CD8-positive, alpha-beta T cell (primary cell): ENCODE measurements at regions of chr2 and their contacts with region 1.

Region 1: DNA sequence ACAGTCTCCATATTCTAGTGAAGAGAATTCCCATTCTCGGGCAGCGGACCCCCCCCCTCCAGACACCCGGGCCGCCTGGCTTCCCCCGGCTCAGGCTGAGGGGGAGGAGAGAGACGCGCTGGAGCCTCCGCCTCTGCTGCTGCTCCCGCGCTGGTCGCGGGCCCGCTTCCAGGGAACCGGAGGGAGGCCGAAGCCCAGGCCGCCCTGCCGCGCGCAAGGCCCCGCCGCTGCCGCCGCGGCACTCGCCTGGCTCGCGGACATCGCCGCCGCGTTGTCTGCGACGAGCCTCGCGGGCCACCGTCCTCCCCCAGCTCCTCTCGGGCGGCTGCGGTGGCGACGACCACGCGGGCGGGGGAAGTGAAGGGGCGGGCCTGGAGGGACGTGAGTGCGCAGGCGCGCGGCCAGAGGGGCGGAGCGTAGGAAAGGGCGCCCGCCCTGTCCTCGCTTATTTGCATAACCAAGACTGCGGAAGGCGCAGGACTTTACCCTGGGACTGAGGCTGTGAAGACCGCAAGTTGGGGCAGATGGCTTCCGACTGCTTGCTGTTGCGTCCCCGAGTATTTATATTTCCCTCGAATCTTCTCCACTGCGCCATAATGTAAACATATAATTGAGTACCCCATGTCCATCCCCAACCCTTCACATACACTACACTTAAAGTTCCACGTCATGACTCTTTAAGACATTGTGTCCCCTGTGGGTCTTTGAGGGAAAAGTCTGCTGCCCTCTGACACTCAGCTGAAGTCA is at the start of gene ARL5A:
- DNase-seq: peak; percentile 91 to 98 (median 94)
- ATAC-seq: peak; percentile 95
- H3K4me3 ChIP-seq: peak within 1 kb of the TSS; percentile 66 to 97
- H3K4me3 Mint-ChIP-seq: peak within 1 kb of the TSS; percentile 85
- H3K27ac ChIP-seq: peak within 1 kb of the TSS; percentile 22 to 80
- H3K27ac Mint-ChIP-seq: peak within 1 kb of the TSS; percentile 93
- H3K4me1 ChIP-seq: peaks cover 34% of the 10 kb centered on the region
- H3K4me1 Mint-ChIP-seq: peaks cover 53% of the 10 kb centered on the region
- H3K27me3 ChIP-seq: no peaks in the 10 kb centered on the region
- H3K27me3 Mint-ChIP-seq: no peaks in the 10 kb centered on the region
- CTCF ChIP-seq: no peak
- total RNA-seq, gene ARL5A: 18.8 to 24.1 TPM

Region 2: GRCh38 chr2:150981826-150982225 is 846.5 kb before region 1 on chr2:
- CTCF ChIA-PET with region 1: no interaction called
- POLR2A ChIA-PET with region 1: no interaction called
- intact Hi-C with region 1: no loop called
- DNase-seq: no peak
- ATAC-seq: no peak
- H3K4me3 ChIP-seq: no peak overlapping the region
- H3K4me3 Mint-ChIP-seq: no peak overlapping the region
- H3K27ac ChIP-seq: no peak overlapping the region
- H3K27ac Mint-ChIP-seq: no peak overlapping the region
- H3K4me1 ChIP-seq: no peaks in the 10 kb centered on the region
- H3K4me1 Mint-ChIP-seq: no peaks in the 10 kb centered on the region
- H3K27me3 ChIP-seq: no peaks in the 10 kb centered on the region
- H3K27me3 Mint-ChIP-seq: peaks cover 15% of the 10 kb centered on the region
- CTCF ChIP-seq: no peak

Region 3: DNA sequence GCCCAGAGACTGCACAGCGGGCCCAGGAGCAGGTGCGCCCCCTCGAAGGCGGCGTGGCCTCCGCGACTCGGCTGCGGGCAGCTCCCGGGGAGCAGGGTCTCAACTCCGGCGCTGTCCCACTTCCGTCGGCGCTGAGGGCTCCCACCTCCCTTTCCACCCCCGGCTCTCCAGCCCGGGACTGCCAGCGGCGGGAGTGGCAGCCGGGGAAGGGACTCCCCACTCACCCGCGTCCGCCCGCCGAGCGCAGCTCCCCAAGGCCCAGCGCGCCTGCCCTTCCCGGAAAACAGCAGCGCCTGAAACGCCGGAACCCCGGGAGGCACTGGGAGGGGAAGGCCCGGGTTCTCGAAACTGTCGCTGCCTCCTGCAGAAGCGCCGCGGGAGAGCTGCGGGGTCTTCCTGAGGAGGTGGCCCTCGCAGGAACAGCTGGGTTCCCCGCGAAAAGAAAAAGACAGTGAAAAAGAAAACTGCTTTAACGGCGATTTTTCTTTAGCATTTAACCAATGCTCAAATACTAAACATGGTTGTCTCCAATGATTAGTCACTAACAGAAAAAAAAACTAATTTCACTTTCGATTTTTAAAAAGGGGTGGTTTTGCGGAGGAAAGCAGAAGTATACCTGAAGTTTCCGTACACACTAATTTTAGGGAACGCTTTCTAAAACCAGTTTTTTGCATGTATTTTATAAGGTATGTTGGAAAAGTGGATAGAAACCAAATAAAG is 538.8 kb before region 1 on chr2 and contains the start of gene NMI:
- CTCF ChIA-PET with region 1: no interaction called
- POLR2A ChIA-PET with region 1: no interaction called
- intact Hi-C with region 1: loop called (anchors 5 kb)
- DNase-seq: peak; percentile 30 to 82 (median 64)
- ATAC-seq: peak; percentile 68
- H3K4me3 ChIP-seq: peak within 1 kb of the TSS; percentile 89 to 92
- H3K4me3 Mint-ChIP-seq: peak within 1 kb of the TSS; percentile 95
- H3K27ac ChIP-seq: peak within 1 kb of the TSS; percentile 92 to 97
- H3K27ac Mint-ChIP-seq: peak within 1 kb of the TSS; percentile 99
- H3K4me1 ChIP-seq: peaks cover 31% of the 10 kb centered on the region
- H3K4me1 Mint-ChIP-seq: peaks cover 46% of the 10 kb centered on the region
- H3K27me3 ChIP-seq: no peaks in the 10 kb centered on the region
- H3K27me3 Mint-ChIP-seq: no peaks in the 10 kb centered on the region
- CTCF ChIP-seq: no peak
- total RNA-seq, gene NMI: 16.9 to 18.0 TPM

Region 4: DNA sequence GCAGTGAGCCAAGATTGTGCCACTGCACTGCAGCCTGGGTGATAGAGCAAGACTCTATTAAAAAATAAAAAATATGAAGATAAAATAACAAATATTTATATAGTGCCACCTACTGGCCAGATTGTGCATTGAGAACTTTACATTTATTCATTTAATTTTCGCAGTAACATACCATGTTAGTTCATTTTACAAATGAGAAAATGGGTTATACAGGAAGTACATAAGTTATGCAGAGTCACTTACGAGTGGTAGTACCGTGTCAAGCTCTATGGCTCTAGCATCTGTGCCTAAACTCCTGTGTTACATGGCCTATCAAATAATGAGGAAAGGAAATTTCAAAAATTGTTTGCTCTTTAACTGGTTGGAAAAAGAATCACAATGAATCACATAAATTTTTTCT is 390.7 kb before region 1 on chr2:
- CTCF ChIA-PET with region 1: no interaction called
- POLR2A ChIA-PET with region 1: no interaction called
- intact Hi-C with region 1: loop called in 1 of 2 experiments (anchors 10 kb)
- DNase-seq: peak in 3 of 9 experiments; percentile 19 to 48 (median 36)
- ATAC-seq: peak; percentile 62
- H3K4me3 ChIP-seq: no peak overlapping the region
- H3K4me3 Mint-ChIP-seq: no peak overlapping the region
- H3K27ac ChIP-seq: no peak overlapping the region
- H3K27ac Mint-ChIP-seq: peak overlapping the region; percentile 66
- H3K4me1 ChIP-seq: peaks cover 3% of the 10 kb centered on the region
- H3K4me1 Mint-ChIP-seq: peaks cover 7% of the 10 kb centered on the region
- H3K27me3 ChIP-seq: no peaks in the 10 kb centered on the region
- H3K27me3 Mint-ChIP-seq: no peaks in the 10 kb centered on the region
- CTCF ChIP-seq: peak; percentile 84

Region 5: GRCh38 chr2:151808258-151809072 is 19.9 kb before region 1 on chr2:
- CTCF ChIA-PET with region 1: no interaction called
- POLR2A ChIA-PET with region 1: interaction called, 3 read pairs
- intact Hi-C with region 1: loop called in 1 of 2 experiments (anchors 2 kb)
- DNase-seq: peak in 2 of 9 experiments; percentile 52 to 65
- ATAC-seq: peak; percentile 56
- H3K4me3 ChIP-seq: no peak overlapping the region
- H3K4me3 Mint-ChIP-seq: no peak overlapping the region
- H3K27ac ChIP-seq: no peak overlapping the region
- H3K27ac Mint-ChIP-seq: no peak overlapping the region
- H3K4me1 ChIP-seq: peaks cover 12% of the 10 kb centered on the region
- H3K4me1 Mint-ChIP-seq: peaks cover 7% of the 10 kb centered on the region
- H3K27me3 ChIP-seq: no peaks in the 10 kb centered on the region
- H3K27me3 Mint-ChIP-seq: no peaks in the 10 kb centered on the region
- CTCF ChIP-seq: peak; percentile 61